WTC11 (cell line): ENCODE measurements at regions of chr12 and their contacts with region 1.

Region 1: DNA sequence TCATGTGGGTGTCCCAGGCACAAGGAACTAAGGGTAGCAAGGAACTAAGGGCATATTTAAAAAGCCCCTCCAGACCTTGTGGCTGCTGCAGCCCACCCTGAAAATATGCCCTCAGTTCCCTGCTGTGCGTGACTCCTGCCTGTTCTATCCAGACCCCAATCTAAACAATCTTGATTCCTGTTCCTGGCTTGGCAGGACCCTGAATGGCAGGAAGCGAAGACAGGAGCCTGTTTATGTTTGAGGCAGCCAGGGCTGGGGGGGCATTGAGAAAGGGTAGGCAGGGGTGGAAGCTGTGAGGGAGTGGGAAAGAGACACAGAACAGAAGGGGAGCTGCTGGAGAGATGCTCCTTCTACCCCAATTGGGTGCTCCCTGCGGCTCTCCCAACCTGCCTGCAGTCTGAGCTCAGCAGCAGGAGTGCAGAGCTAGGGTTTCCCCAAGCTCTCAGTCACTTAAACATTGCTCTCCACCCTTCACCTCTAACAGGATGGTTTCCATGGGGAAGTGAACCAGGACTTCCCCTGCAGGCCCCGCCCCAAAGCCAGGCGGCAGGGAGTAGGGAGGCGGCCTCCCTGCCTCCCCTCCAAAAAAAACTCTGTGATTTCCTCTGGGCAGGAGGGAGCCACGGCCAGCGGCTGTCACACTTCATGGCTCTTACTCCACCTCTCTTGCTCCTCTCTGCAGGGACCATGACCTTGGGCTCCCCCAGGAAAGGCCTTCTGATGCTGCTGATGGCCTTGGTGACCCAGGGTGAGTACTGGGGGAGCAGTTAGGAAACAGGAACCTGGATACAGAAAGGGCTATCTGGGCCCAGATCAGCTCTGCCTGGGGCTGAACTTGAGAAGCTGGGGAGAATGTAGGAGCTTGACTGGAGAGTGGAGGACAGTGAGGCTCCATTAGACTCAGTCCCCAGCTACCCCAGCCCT is 4.7 kb downstream of the ACVRL1 start:
- DNase-seq: no peak
- ATAC-seq: peak; percentile 31
- H3K4me3 Mint-ChIP-seq: no peak overlapping the region
- H3K27ac Mint-ChIP-seq: no peak overlapping the region
- H3K4me1 Mint-ChIP-seq: peaks cover 18% of the 10 kb centered on the region
- H3K27me3 Mint-ChIP-seq: peaks cover 35% of the 10 kb centered on the region
- CTCF ChIP-seq: no peak

Region 2: DNA sequence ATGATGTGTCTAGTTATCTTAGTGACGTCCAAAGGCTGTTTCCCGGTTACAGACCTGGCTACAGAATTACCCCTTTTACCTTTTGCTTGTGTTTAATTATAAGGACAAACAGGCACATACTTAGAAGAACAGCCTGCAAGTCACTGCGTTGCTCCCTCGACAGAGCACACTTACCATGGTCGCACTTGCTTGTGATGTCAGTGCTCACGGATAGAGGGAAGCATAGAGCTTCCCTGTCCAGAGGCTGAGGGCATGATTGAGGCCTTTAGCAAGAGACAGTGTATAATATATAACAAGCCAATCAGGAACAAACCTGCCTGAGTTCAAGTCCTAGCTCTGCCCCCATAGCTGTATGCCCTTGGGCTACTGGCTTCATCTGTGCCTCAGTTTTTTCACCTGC is 394.2 kb before region 1 on chr12:
- CTCF ChIA-PET with region 1: no interaction called
- POLR2A ChIA-PET with region 1: no interaction called
- DNase-seq: peak; percentile 24
- ATAC-seq: peak; percentile 86
- H3K4me3 Mint-ChIP-seq: no peak overlapping the region
- H3K27ac Mint-ChIP-seq: no peak overlapping the region
- H3K4me1 Mint-ChIP-seq: no peaks in the 10 kb centered on the region
- H3K27me3 Mint-ChIP-seq: no peaks in the 10 kb centered on the region
- CTCF ChIP-seq: no peak; the same call in 1 of the 2 replicates

Region 3: DNA sequence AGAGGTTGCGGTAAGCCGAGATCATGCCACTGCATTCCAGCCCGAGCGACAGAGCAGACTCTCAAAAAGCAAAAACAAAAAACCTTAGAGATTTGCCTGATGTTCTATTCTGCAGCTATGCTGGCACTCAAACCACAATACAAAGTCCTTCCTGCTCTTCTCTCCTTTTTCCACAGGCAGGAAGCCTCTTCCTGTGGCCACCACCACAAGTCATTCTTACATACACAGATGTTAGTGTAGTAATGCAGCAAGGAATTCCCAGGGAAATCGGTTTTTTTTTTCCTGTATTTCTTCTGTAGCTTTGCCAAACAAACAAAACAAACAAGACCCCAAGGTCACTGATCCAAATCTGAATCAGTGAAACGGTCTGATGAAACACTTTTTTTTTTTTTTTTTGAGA is 167.8 kb before region 1 on chr12:
- CTCF ChIA-PET with region 1: no interaction called
- POLR2A ChIA-PET with region 1: no interaction called
- DNase-seq: no peak
- ATAC-seq: no peak
- H3K4me3 Mint-ChIP-seq: no peak overlapping the region
- H3K27ac Mint-ChIP-seq: no peak overlapping the region
- H3K4me1 Mint-ChIP-seq: no peaks in the 10 kb centered on the region
- H3K27me3 Mint-ChIP-seq: peaks cover 4% of the 10 kb centered on the region; the same call in 1 of the 2 replicates
- CTCF ChIP-seq: no peak

Region 4: GRCh38 chr12:51788876-51789275 is 123.2 kb before region 1 on chr12:
- CTCF ChIA-PET with region 1: no interaction called
- POLR2A ChIA-PET with region 1: no interaction called
- DNase-seq: no peak
- ATAC-seq: no peak
- H3K4me3 Mint-ChIP-seq: no peak overlapping the region
- H3K27ac Mint-ChIP-seq: no peak overlapping the region
- H3K4me1 Mint-ChIP-seq: no peaks in the 10 kb centered on the region
- H3K27me3 Mint-ChIP-seq: no peaks in the 10 kb centered on the region
- CTCF ChIP-seq: no peak

Region 5: GRCh38 chr12:51863933-51864832 is 47.9 kb before region 1 on chr12:
- CTCF ChIA-PET with region 1: interaction called, 13 read pairs
- POLR2A ChIA-PET with region 1: no interaction called
- DNase-seq: peak; percentile 88
- ATAC-seq: peak; percentile 86
- H3K4me3 Mint-ChIP-seq: peak overlapping the region; percentile 80
- H3K27ac Mint-ChIP-seq: no peak overlapping the region
- H3K4me1 Mint-ChIP-seq: peaks cover 52% of the 10 kb centered on the region
- H3K27me3 Mint-ChIP-seq: peaks cover 65% of the 10 kb centered on the region
- CTCF ChIP-seq: no peak

Region 6: DNA sequence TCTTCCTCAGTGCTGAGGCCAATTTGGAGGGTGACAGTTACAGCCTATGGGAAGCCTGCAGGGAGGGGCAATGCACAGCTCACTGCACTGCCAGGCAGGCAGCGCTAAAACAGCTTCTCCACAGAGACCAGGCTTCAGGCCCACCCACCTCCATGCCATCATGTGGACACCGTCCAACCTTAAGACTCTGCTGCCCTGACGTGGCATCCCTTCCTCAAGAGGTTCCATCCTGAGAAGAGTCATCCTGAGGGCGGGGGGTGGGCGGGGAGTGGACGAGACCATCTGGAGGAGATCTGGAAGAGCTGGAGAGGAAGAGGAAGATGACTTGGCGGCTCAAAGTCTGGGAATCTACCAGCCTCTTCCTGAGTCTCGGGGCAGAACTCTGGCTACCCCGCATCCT is 13.1 kb before region 1 on chr12:
- CTCF ChIA-PET with region 1: interaction called, 43 read pairs
- POLR2A ChIA-PET with region 1: interaction called, 3 read pairs
- DNase-seq: no peak
- ATAC-seq: no peak
- H3K4me3 Mint-ChIP-seq: no peak overlapping the region
- H3K27ac Mint-ChIP-seq: no peak overlapping the region
- H3K4me1 Mint-ChIP-seq: peaks cover 2% of the 10 kb centered on the region; the same call in 1 of the 2 replicates
- H3K27me3 Mint-ChIP-seq: 0 out of 2 replicates have a peak, but pooled peaks cover 2% of the 10 kb centered on the region
- CTCF ChIP-seq: no peak

Region 7: GRCh38 chr12:51932218-51933076 is 20.4 kb after region 1 on chr12:
- CTCF ChIA-PET with region 1: interaction called, 18 read pairs
- POLR2A ChIA-PET with region 1: no interaction called
- DNase-seq: no peak
- ATAC-seq: no peak
- H3K4me3 Mint-ChIP-seq: no peak overlapping the region
- H3K27ac Mint-ChIP-seq: no peak overlapping the region
- H3K4me1 Mint-ChIP-seq: no peaks in the 10 kb centered on the region
- H3K27me3 Mint-ChIP-seq: peaks cover 6% of the 10 kb centered on the region; the same call in 1 of the 2 replicates
- CTCF ChIP-seq: no peak

Region 8: DNA sequence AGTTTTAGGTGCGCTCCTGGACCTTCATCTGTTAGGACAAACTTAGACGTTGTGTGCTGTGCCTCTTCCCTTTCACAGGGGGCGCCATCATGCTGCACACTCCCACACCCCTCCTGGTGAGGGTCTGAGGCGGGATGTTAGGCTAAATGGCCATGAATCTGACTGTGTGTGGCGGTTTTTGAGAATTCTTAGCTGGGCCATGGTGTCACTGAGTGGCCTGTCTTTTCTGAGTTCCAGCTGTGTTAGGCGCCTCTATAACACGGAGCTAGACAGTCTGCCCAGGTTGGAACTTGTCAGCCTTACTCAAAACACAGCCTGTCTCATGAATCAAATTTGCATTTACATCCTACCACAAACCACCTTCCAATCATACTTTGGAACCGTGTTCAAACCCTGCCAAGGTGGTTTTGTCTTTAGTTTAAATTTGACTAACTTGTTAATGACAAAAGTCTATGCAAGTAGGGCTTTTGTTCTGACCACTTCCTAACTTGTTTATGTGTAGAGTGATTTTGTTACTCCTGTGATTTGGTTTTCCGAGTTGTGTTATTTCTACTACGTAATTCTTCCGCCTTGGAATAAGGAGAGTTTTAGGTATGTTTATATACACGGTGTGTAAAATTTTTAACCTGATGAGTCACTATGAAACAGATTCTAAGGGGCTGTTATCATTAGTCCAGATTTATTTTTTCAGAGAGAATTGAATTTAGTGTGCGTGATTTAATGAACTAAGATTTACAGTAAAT is 59.0 kb after region 1 on chr12:
- CTCF ChIA-PET with region 1: interaction called, 24 read pairs
- POLR2A ChIA-PET with region 1: no interaction called
- DNase-seq: peak; percentile 63
- ATAC-seq: peak; percentile 95
- H3K4me3 Mint-ChIP-seq: no peak overlapping the region
- H3K27ac Mint-ChIP-seq: peak overlapping the region; percentile 52; the same call in 1 of the 2 replicates
- H3K4me1 Mint-ChIP-seq: peaks cover 32% of the 10 kb centered on the region
- H3K27me3 Mint-ChIP-seq: no peaks in the 10 kb centered on the region
- CTCF ChIP-seq: peak; percentile 82

Region 9: DNA sequence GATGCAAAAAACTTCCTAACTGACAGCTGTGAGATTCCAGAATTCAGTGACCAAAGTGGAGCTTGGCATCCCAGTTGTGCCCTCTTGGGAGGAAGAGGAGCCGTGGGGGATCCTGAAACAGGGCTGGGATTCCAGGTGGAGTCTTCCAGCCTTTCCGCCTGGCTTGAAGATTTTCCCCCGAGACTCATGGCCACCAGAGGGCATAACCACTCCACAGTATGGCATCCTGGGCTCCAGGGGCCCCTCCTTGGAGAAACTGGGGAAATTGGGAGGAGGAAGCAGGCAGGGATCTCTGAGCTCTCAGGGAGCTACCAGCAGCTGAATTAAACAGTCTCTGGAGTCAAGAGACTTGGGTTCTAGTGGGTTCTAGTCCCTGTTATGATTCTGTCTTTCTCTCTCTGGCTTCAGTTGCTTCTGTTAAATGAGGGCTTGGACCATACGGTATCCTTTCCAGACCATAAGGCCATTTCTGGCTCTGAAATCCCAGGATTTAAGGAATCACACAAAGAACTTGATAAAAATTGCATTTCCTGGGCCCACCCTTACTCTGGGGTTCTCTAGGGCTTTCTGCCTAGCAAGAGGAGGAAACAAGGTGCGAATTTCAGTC is 92.1 kb after region 1 on chr12:
- CTCF ChIA-PET with region 1: interaction called, 16 read pairs
- POLR2A ChIA-PET with region 1: no interaction called
- DNase-seq: peak; percentile 74
- ATAC-seq: peak; percentile 39
- H3K4me3 Mint-ChIP-seq: no peak overlapping the region
- H3K27ac Mint-ChIP-seq: no peak overlapping the region
- H3K4me1 Mint-ChIP-seq: peaks cover 20% of the 10 kb centered on the region
- H3K27me3 Mint-ChIP-seq: peaks cover 47% of the 10 kb centered on the region
- CTCF ChIP-seq: peak; percentile 42